Activated CD8-positive, alpha-beta T cell treated with anti-CD3 and anti-CD28 coated beads, Interleukin-2, amount 10 ng/mL, durations not matched to agents 7 days and 5 days (primary cell): ENCODE measurements at regions of chr9 and their contacts with region 1.

Region 1: DNA sequence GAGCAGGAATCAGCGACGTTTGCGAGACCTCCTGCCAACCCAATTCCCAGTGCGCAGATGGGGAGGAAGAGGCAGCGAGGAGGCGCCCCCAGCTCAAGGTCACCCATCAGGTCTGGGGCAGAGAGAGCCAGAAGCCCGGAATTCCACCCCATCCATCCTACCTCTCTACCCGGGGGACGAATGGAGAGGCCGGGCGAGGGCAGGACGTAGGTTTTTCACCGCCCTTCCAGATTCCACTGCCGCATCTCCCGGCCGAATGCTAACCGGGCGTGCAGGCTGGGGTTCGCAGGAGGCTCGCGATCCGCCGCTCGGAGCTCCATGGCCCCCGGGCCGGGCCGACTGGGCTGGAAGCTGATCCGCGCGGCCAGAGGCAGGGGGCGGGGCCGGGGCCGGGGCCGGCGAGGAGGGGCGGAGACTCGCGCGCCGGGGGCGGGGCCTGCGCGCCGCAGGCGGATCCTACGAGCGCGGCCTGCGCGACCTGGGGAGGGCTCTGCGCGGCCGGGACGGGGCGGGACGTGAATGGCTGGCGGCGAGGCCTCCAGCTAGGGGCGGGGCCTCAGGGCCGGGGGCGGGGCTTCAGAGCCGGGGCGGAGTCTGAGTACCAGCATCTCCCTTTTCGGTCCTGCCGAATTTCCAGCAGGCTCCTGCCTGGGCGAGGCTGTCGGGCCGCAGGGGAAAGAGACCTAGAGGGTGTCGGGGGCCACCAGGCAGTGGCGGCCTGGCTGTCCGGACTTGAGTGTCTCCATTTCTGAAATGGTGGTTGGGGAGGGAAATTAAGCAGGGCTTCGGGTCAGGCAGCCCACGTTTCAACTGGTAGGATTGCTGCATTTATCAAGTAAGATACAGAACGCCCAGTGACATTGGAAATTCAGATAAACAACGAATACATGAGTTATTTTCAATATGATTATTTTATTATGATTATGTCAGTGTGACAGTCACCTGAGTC is at the start of gene ST6GALNAC4:
- DNase-seq: peak; percentile 96
- ATAC-seq: peak; percentile 93
- H3K4me3 Mint-ChIP-seq: peak within 1 kb of the TSS; percentile 89
- H3K27ac Mint-ChIP-seq: peak within 1 kb of the TSS; percentile 95
- H3K4me1 Mint-ChIP-seq: peaks cover 75% of the 10 kb centered on the region
- H3K27me3 Mint-ChIP-seq: no peaks in the 10 kb centered on the region
- total RNA-seq, gene ST6GALNAC4: 37.0 to 39.7 TPM

Region 2: GRCh38 chr9:127586537-127586936 is 330.4 kb before region 1 on chr9:
- CTCF ChIA-PET with region 1: interaction called, 12 read pairs
- POLR2A ChIA-PET with region 1: no interaction called
- DNase-seq: peak; percentile 75
- ATAC-seq: peak; percentile 80
- H3K4me3 Mint-ChIP-seq: no peak overlapping the region
- H3K27ac Mint-ChIP-seq: peak overlapping the region; percentile 39
- H3K4me1 Mint-ChIP-seq: peaks cover 27% of the 10 kb centered on the region
- H3K27me3 Mint-ChIP-seq: peaks cover 12% of the 10 kb centered on the region

Region 3: GRCh38 chr9:127785023-127785932 is 131.7 kb before region 1 on chr9:
- CTCF ChIA-PET with region 1: interaction called, 26 read pairs
- POLR2A ChIA-PET with region 1: interaction called, 5 read pairs
- DNase-seq: peak; percentile 93
- ATAC-seq: peak; percentile 46
- H3K4me3 Mint-ChIP-seq: peak overlapping the region; percentile 77
- H3K27ac Mint-ChIP-seq: peak overlapping the region; percentile 95
- H3K4me1 Mint-ChIP-seq: peaks cover 75% of the 10 kb centered on the region
- H3K27me3 Mint-ChIP-seq: no peaks in the 10 kb centered on the region

Region 4: GRCh38 chr9:127877566-127877998 is 39.4 kb before region 1 on chr9 and contains the start of gene AK1:
- CTCF ChIA-PET with region 1: interaction called, 19 read pairs
- POLR2A ChIA-PET with region 1: interaction called, 5 read pairs
- DNase-seq: no peak
- ATAC-seq: no peak
- H3K4me3 Mint-ChIP-seq: no peak within 1 kb of the TSS
- H3K27ac Mint-ChIP-seq: no peak within 1 kb of the TSS
- H3K4me1 Mint-ChIP-seq: peaks cover 4% of the 10 kb centered on the region
- H3K27me3 Mint-ChIP-seq: peaks cover 3% of the 10 kb centered on the region
- total RNA-seq, gene AK1: 22.4 to 30.4 TPM

Region 5: GRCh38 chr9:127930231-127931091 is 13.5 kb after region 1 on chr9 and contains the start of gene PIP5KL1:
- CTCF ChIA-PET with region 1: interaction called, 15 read pairs
- POLR2A ChIA-PET with region 1: interaction called, 4 read pairs
- DNase-seq: peak; percentile 77
- ATAC-seq: peak; percentile 78
- H3K4me3 Mint-ChIP-seq: peak within 1 kb of the TSS; percentile 64
- H3K27ac Mint-ChIP-seq: no peak within 1 kb of the TSS
- H3K4me1 Mint-ChIP-seq: peaks cover 66% of the 10 kb centered on the region
- H3K27me3 Mint-ChIP-seq: peaks cover 15% of the 10 kb centered on the region
- total RNA-seq, gene PIP5KL1: 2.6 to 2.7 TPM